ENCODE measurements at regions of chr13 and their contacts with region 1.

Region 1: GRCh38 chr13:36354842-36355623 is 8.8 kb upstream of the SPART start:
- DNase-seq: no peak
- H3K4me3 ChIP-seq: no peak overlapping the region
- H3K27ac ChIP-seq: no peak overlapping the region
- H3K4me1 ChIP-seq: no peaks in the 10 kb centered on the region
- H3K27me3 ChIP-seq: no peaks in the 10 kb centered on the region
- CTCF ChIP-seq: no peak
- POLR2A ChIP-seq: no peak

Region 2: DNA sequence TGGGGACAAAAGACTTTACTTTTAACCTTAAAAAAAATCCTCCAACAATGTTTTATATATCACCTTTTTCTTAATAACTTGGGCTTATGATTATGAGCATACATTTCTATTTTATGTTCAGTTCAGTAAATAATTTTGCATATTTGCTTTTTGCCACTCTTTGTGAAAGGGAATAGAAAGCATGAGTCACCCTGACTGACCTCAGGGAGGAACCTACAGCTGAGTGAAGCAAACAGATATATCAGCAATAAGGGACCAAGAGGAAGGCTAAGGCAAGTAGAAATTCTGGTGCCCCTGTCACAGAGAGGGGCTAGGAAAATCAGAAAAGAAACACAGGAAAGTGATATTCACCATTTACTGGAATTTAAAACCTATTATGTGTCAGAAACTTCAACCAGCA is 103.5 kb before region 1 on chr13:
- intact Hi-C with region 1: no loop called
- DNase-seq: no peak
- H3K4me3 ChIP-seq: no peak overlapping the region
- H3K27ac ChIP-seq: no peak overlapping the region
- H3K4me1 ChIP-seq: no peaks in the 10 kb centered on the region
- H3K27me3 ChIP-seq: no peaks in the 10 kb centered on the region
- CTCF ChIP-seq: no peak
- POLR2A ChIP-seq: no peak

Region 3: DNA sequence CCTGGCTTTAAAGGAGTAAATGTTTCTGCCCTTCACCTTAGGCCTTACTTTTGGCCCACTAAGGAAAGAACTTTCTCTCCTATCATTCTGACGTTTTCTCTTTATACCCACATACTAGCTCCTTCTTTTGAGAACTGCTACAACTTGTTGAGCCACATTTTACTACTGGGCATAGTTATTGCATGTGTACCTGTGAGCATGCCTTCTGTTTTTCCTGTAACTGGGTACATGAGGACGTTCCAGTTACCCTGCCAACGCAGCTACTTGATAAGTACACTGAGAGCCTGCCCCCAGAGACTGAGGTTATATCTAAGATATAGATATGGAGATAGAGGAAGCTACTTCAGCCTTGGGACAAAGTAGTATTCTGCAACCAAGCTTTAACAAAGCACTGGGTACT is 60.9 kb before region 1 on chr13:
- intact Hi-C with region 1: loop called (anchors 2 kb)
- DNase-seq: no peak
- H3K4me3 ChIP-seq: no peak overlapping the region
- H3K27ac ChIP-seq: no peak overlapping the region
- H3K4me1 ChIP-seq: no peaks in the 10 kb centered on the region
- H3K27me3 ChIP-seq: no peaks in the 10 kb centered on the region
- CTCF ChIP-seq: no peak
- POLR2A ChIP-seq: no peak

Region 4: DNA sequence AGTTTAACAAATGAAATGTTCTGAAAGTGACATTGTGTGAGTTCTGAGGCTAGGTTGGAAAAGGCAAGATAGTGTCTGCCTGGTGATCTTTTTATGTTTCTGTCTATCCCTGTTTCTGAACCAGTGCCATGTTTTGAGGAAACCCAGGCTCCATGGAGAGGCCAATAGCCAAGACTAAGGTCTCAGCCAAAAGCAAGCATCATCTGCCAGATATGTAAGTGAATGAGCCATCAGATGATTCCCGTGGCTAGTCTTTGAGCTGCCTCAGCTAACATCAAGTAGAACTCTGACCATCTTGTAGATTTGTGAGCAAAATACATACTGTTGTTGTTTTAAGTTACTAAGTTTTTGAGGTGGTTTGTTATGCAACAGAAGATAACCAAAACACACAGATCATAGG is 57.7 kb after region 1 on chr13:
- intact Hi-C with region 1: no loop called
- DNase-seq: no peak
- H3K4me3 ChIP-seq: no peak overlapping the region
- H3K27ac ChIP-seq: no peak overlapping the region
- H3K4me1 ChIP-seq: no peaks in the 10 kb centered on the region
- H3K27me3 ChIP-seq: no peaks in the 10 kb centered on the region
- CTCF ChIP-seq: no peak
- POLR2A ChIP-seq: no peak